Naive thymus-derived CD4-positive, alpha-beta T cell (primary cell): ENCODE measurements at regions of chr7 and their contacts with region 1.

Region 1: GRCh38 chr7:10889266-10889898 is 84.3 kb upstream of the PHF14 start:
- DNase-seq: peak in 8 of 9 donors; percentile 6 to 55 (median 34)
- ATAC-seq: peak; percentile 87
- H3K4me3 ChIP-seq: peak overlapping the region; percentile 16
- H3K4me3 Mint-ChIP-seq: peak overlapping the region; percentile 32 to 74 (median 61)
- H3K27ac ChIP-seq: no peak overlapping the region
- H3K27ac Mint-ChIP-seq: peak overlapping the region in 1 of 9 donors; percentile 21
- H3K4me1 ChIP-seq: peaks cover 5 to 8% of the 10 kb centered on the region in 2 donors
- H3K4me1 Mint-ChIP-seq: peaks cover 6 to 13% (median 11%) of the 10 kb centered on the region in 7 donors
- H3K27me3 ChIP-seq: no peaks in the 10 kb centered on the region
- H3K27me3 Mint-ChIP-seq: peaks cover 0 to 3% (median 0%) of the 10 kb centered on the region in 5 donors

Region 2: GRCh38 chr7:10637991-10638390 is 251.4 kb before region 1 on chr7:
- CTCF ChIA-PET with region 1: no interaction called
- POLR2A ChIA-PET with region 1: no interaction called
- intact Hi-C with region 1: loop called in 1 of 2 experiments (anchors 5 kb)
- DNase-seq: no peak
- ATAC-seq: no peak
- H3K4me3 ChIP-seq: no peak overlapping the region
- H3K4me3 Mint-ChIP-seq: no peak overlapping the region
- H3K27ac ChIP-seq: no peak overlapping the region
- H3K27ac Mint-ChIP-seq: no peak overlapping the region
- H3K4me1 ChIP-seq: peaks cover 0 to under 1% of the 10 kb centered on the region in 2 donors
- H3K4me1 Mint-ChIP-seq: peaks cover 0 to 11% (median 5%) of the 10 kb centered on the region in 7 donors
- H3K27me3 ChIP-seq: no peaks in the 10 kb centered on the region
- H3K27me3 Mint-ChIP-seq: no peaks in the 10 kb centered on the region

Region 3: GRCh38 chr7:10973061-10973944 is 83.9 kb after region 1 on chr7 and contains the start of gene PHF14:
- CTCF ChIA-PET with region 1: no interaction called
- POLR2A ChIA-PET with region 1: no interaction called
- intact Hi-C with region 1: no loop called
- DNase-seq: peak; percentile 86 to 97 (median 95)
- ATAC-seq: peak; percentile 96
- H3K4me3 ChIP-seq: peak within 1 kb of the TSS; percentile 90
- H3K4me3 Mint-ChIP-seq: peak within 1 kb of the TSS; percentile 77 to 95 (median 92)
- H3K27ac ChIP-seq: peak within 1 kb of the TSS; percentile 71
- H3K27ac Mint-ChIP-seq: peak within 1 kb of the TSS; percentile 85 to 97 (median 94)
- H3K4me1 ChIP-seq: peaks cover 9 to 20% of the 10 kb centered on the region in 2 donors
- H3K4me1 Mint-ChIP-seq: peaks cover 14 to 54% (median 38%) of the 10 kb centered on the region in 7 donors
- H3K27me3 ChIP-seq: no peaks in the 10 kb centered on the region
- H3K27me3 Mint-ChIP-seq: peaks cover 5 to 22% (median 12%) of the 10 kb centered on the region in 5 donors
- total RNA-seq, gene PHF14: 29.8 to 41.3 (median 36.7) TPM

Region 4: GRCh38 chr7:11212080-11212711 is 322.8 kb after region 1 on chr7:
- CTCF ChIA-PET with region 1: interaction called, 4 read pairs
- POLR2A ChIA-PET with region 1: no interaction called
- intact Hi-C with region 1: loop called (anchors 1 kb)
- DNase-seq: peak in 8 of 9 donors; percentile 2 to 51 (median 37)
- ATAC-seq: peak; percentile 73
- H3K4me3 ChIP-seq: no peak overlapping the region
- H3K4me3 Mint-ChIP-seq: no peak overlapping the region
- H3K27ac ChIP-seq: no peak overlapping the region
- H3K27ac Mint-ChIP-seq: no peak overlapping the region
- H3K4me1 ChIP-seq: no peaks in the 10 kb centered on the region
- H3K4me1 Mint-ChIP-seq: peaks cover 0 to 4% (median 0%) of the 10 kb centered on the region in 7 donors
- H3K27me3 ChIP-seq: no peaks in the 10 kb centered on the region
- H3K27me3 Mint-ChIP-seq: peaks cover 0 to 20% (median 5%) of the 10 kb centered on the region in 5 donors

Region 5: GRCh38 chr7:11343818-11344413 is 454.5 kb after region 1 on chr7:
- CTCF ChIA-PET with region 1: no interaction called
- POLR2A ChIA-PET with region 1: no interaction called
- intact Hi-C with region 1: loop called (anchors 5 to 10 kb)
- DNase-seq: peak in 5 of 9 donors; percentile 30 to 37 (median 31)
- ATAC-seq: peak; percentile 51
- H3K4me3 ChIP-seq: no peak overlapping the region
- H3K4me3 Mint-ChIP-seq: no peak overlapping the region
- H3K27ac ChIP-seq: no peak overlapping the region
- H3K27ac Mint-ChIP-seq: no peak overlapping the region
- H3K4me1 ChIP-seq: no peaks in the 10 kb centered on the region
- H3K4me1 Mint-ChIP-seq: peaks cover 0 to 8% (median 5%) of the 10 kb centered on the region in 7 donors
- H3K27me3 ChIP-seq: no peaks in the 10 kb centered on the region
- H3K27me3 Mint-ChIP-seq: peaks cover 6 to 8% (median 7%) of the 10 kb centered on the region in 5 donors